H1 (cell line): ENCODE measurements at regions of chr11 and their contacts with region 1.

Region 1: DNA sequence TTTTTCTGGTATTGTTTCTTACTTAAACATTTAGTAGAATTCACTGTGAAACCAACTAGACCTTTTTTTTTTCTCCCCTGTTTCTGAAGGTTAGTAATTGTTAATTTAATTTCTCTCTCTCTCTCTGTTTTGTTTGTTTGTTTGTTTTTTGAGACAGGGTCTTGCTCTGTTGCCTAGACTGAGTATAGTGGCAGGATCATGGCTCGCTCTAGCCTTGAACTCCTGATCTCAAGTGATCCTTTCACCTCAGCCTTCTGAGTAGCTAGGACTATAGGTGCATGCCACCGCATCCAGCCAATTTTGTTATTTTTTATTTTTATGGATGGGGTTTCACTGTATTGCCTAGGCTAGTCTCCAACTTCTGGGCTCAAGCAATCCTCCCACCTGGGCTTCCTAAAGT is 165.0 kb downstream of the UVRAG start:
- DNase-seq: no peak
- H3K4me3 ChIP-seq: peak overlapping the region; percentile 44 to 97 (median 49)
- H3K27ac ChIP-seq: peak overlapping the region; percentile 85; the same call in 1 of the 2 replicates
- H3K4me1 ChIP-seq: peaks cover 0 to 4% (median 0%) of the 10 kb centered on the region in 4 experiments; a peak in 2 of 7 replicates
- H3K27me3 ChIP-seq: peaks cover 0 to 1% (median 0%) of the 10 kb centered on the region in 4 experiments; a peak in 1 of 7 replicates
- CTCF ChIP-seq: no peak
- EP300 ChIP-seq: no peak
- POLR2A ChIP-seq: no peak
- RAD21 ChIP-seq: no peak

Region 2: GRCh38 chr11:75966546-75967287 is 13.3 kb before region 1 on chr11:
- CTCF ChIA-PET with region 1: no interaction called
- POLR2A ChIA-PET with region 1: interaction called, 15 read pairs
- DNase-seq: no peak
- H3K4me3 ChIP-seq: no peak overlapping the region
- H3K27ac ChIP-seq: no peak overlapping the region
- H3K4me1 ChIP-seq: no peaks in the 10 kb centered on the region; a peak in 1 of 7 replicates
- H3K27me3 ChIP-seq: no peaks in the 10 kb centered on the region
- CTCF ChIP-seq: no peak
- EP300 ChIP-seq: no peak
- POLR2A ChIP-seq: no peak
- RAD21 ChIP-seq: no peak

Region 3: GRCh38 chr11:75993126-75993525 is 13.1 kb after region 1 on chr11:
- CTCF ChIA-PET with region 1: interaction called, 4 read pairs
- POLR2A ChIA-PET with region 1: interaction called, 12 read pairs
- DNase-seq: no peak
- H3K4me3 ChIP-seq: no peak overlapping the region
- H3K27ac ChIP-seq: no peak overlapping the region
- H3K4me1 ChIP-seq: no peaks in the 10 kb centered on the region
- H3K27me3 ChIP-seq: no peaks in the 10 kb centered on the region
- CTCF ChIP-seq: no peak
- EP300 ChIP-seq: no peak
- POLR2A ChIP-seq: no peak
- RAD21 ChIP-seq: no peak

Region 4: DNA sequence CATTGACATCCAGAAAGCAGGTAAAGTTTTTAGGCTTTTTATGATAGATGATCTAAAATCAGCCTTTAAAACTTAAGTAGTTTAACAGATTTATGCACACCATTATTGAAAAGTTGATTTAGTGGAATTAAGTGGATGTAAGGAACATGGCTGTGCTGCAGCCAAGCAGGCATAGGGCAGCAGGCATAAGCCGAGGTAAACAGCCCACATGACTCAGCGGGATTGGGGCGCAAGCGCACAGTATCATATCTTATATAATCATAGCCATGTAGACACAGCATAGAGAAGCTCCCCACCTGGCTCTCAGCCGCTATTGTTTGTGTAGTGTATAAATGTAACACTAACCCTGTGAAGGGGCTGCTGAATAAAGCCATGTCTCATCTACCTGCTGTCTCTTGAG is 68.7 kb after region 1 on chr11:
- CTCF ChIA-PET with region 1: no interaction called
- POLR2A ChIA-PET with region 1: no interaction called
- DNase-seq: no peak
- H3K4me3 ChIP-seq: no peak overlapping the region
- H3K27ac ChIP-seq: no peak overlapping the region
- H3K4me1 ChIP-seq: peaks cover 0 to 2% (median 0%) of the 10 kb centered on the region in 4 experiments; a peak in 1 of 7 replicates
- H3K27me3 ChIP-seq: no peaks in the 10 kb centered on the region
- CTCF ChIP-seq: no peak
- EP300 ChIP-seq: no peak
- POLR2A ChIP-seq: no peak
- RAD21 ChIP-seq: no peak